Mammary epithelial cell (primary cell): ENCODE measurements at regions of chr3 and their contacts with region 1.

Region 1: DNA sequence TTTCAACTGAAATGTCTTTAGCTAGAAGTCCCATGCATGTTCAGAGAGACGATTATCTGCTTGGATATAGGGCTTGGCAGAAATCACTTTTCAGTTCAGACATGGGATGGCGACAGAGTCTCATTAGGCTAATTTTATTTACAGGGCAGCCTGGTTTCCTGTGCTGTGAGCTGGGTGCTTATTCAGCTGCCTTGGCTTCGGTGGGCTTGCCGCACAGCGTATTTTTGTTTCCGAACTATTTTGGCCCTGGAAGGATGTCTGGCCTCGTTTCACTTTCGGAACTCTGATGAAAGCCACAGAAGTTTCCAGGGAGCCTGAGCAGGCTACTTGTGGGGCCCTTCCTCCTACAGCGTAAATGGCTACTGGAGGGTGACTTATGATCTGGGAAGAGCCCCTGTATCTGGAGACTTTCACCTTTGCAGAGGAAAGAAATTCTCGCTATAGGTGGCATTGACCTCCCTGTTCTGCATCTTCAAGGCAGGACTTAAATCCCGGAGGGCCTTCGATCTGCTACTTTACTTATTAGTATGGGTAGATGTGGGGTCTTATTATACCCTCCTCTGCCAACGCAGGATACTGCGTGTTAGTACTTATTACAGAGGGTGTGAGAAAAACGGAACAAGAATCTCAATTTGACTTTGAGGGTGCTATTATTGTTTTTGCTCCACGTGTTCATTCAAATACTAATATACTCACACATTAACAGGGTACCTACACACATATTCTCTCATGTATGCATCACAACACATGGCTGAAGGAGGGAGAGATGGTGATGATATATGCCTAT is 364.0 kb upstream of the RBMS3 start:
- DNase-seq: peak; percentile 52
- H3K4me3 ChIP-seq: peak overlapping the region in 1 of 3 experiments; percentile 15
- H3K27ac ChIP-seq: peak overlapping the region; percentile 23
- H3K4me1 ChIP-seq: peaks cover 9% of the 10 kb centered on the region
- H3K27me3 ChIP-seq: no peaks in the 10 kb centered on the region
- CTCF ChIP-seq: peak; percentile 66 to 81

Region 2: DNA sequence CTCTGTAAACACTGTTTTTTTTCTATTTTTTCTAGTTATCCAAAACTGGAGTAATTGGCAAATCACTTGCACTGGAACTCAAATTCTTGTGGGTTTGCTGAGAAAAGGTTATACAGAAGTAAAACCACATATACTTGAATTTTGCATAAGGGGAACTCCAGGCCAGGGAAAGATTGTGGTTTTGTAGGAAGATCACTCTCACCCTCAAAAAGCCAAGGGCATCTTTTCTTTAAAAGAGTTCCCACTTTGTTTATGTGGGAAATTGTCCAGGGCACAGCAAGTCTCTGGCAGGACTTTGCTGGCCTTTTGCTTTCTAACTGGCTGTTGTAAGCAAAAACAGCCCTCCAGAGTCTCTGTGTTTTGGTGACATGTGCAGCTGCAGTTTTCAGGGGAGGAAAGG is 23.6 kb after region 1 on chr3:
- CTCF ChIA-PET with region 1: no interaction called
- dilution Hi-C with region 1: no loop called
- in situ Hi-C with region 1: no loop called
- intact Hi-C with region 1: no loop called
- DNase-seq: peak; percentile 76
- H3K4me3 ChIP-seq: no peak overlapping the region
- H3K27ac ChIP-seq: no peak overlapping the region
- H3K4me1 ChIP-seq: no peaks in the 10 kb centered on the region
- H3K27me3 ChIP-seq: no peaks in the 10 kb centered on the region
- CTCF ChIP-seq: no peak

Region 3: DNA sequence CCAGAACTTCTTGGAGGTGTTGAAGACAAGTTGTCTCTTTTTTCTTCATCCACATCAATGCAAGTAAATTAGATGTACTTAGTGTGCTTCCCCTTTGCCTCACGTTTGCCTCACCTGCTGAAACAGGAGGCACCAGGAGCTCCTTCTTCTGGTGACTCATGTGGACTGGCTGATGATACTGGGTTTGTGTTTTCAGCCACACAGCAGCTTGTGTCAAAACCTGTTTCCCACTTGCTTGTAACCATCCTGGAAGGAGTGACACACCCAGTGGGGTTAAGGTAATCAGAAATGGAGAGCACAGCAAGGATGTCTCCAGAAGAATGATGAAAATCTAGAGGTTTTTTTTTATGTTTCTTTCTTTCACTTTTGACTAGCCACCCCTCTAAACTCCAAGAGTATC is 220.7 kb after region 1 on chr3:
- CTCF ChIA-PET with region 1: no interaction called
- dilution Hi-C with region 1: no loop called
- in situ Hi-C with region 1: no loop called
- intact Hi-C with region 1: loop called (anchors 2 kb)
- DNase-seq: peak; percentile 83
- H3K4me3 ChIP-seq: no peak overlapping the region
- H3K27ac ChIP-seq: no peak overlapping the region
- H3K4me1 ChIP-seq: no peaks in the 10 kb centered on the region
- H3K27me3 ChIP-seq: no peaks in the 10 kb centered on the region
- CTCF ChIP-seq: peak in 1 of 2 donors; percentile 16

Region 4: GRCh38 chr3:29412110-29412509 is 495.2 kb after region 1 on chr3:
- CTCF ChIA-PET with region 1: no interaction called
- dilution Hi-C with region 1: no loop called
- in situ Hi-C with region 1: no loop called
- intact Hi-C with region 1: loop called (anchors 10 kb)
- DNase-seq: no peak
- H3K4me3 ChIP-seq: no peak overlapping the region
- H3K27ac ChIP-seq: no peak overlapping the region
- H3K4me1 ChIP-seq: peaks cover 14% of the 10 kb centered on the region
- H3K27me3 ChIP-seq: no peaks in the 10 kb centered on the region
- CTCF ChIP-seq: no peak

Region 5: DNA sequence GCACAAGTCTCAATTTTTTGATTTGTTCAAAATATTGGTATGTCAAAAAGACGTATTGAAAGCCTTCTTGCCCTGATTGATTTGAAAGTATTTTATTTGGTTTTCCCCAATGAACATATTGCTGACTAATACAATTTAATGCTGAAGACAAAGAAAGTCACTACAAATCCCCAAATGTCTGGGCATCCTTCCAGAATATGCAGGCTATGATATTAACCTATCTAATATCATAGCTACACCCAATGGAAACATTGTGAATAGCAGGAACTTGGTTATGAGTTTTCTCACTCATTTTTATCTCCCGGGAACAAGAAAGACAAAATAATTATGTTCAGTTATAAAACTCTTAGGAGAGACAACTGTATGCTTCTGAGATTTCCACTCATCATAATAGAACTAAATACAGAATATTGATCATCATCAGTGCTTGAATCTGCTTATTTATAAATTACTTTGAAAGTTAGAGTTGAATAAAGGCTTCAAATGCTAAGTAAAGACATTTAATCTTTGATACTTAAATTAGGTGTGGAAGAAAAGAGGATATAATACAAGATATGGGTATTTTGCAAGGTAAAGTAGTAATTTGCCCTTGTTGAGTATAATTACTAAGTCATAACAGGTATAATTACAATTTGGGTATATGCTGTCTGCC is 847.8 kb after region 1 on chr3:
- CTCF ChIA-PET with region 1: interaction called, 7 read pairs
- dilution Hi-C with region 1: no loop called
- in situ Hi-C with region 1: loop called (anchors 10 kb)
- intact Hi-C with region 1: loop called (anchors 1 kb)
- DNase-seq: peak; percentile 70
- H3K4me3 ChIP-seq: no peak overlapping the region
- H3K27ac ChIP-seq: no peak overlapping the region
- H3K4me1 ChIP-seq: peaks cover 7% of the 10 kb centered on the region
- H3K27me3 ChIP-seq: no peaks in the 10 kb centered on the region
- CTCF ChIP-seq: peak; percentile 87 to 90